ENCODE measurements at regions of chr17 and their contacts with region 1.

Region 1: DNA sequence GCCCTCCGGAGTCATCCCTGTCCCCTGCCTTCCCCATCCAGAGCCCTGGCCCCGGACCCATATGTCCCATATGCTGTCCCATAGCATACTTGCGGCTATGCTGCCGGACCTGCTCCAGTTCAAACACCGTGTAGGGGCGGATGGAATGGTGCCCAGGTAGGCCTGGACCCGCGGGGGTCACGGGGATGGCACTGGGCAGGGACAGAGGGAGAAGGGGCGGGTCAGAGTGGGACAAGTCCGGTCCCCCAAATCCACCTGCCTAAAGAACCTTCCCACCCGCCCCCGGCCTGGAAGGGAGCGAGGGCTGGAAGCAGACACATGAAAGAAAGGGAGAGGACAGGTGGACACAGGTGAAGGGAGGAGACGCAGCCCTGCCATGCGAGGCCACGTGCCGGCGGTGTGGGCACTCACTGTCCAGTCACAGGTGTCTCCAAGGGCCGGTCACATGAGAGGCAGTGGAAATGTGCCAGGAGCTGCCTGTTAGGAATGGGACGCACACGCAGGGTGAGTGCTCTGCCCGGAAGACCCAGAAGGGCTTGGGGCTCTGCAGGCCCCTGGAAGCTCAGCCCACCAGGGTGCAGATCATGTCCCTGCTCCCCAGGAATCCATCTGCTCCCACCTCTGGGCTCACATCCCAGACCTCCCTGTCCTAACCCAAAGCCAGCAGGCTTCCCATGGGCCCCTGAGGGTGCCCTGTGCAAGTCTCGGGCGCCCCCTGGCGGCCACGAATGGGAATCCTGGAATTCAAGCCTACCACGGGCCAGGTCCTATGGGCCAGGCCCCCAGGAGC is 14.0 kb downstream of the UBALD2 start:
- DNase-seq: peak; percentile 78 to 84 (median 79)
- H3K4me3 ChIP-seq: no peak overlapping the region
- H3K4me3 Mint-ChIP-seq: no peak overlapping the region
- H3K27ac ChIP-seq: no peak overlapping the region
- H3K27ac Mint-ChIP-seq: peak overlapping the region in 3 of 7 donors; percentile 25 to 77 (median 59)
- H3K4me1 ChIP-seq: peaks cover 17% of the 10 kb centered on the region
- H3K4me1 Mint-ChIP-seq: peaks cover 7 to 28% (median 10%) of the 10 kb centered on the region in 4 donors
- H3K27me3 ChIP-seq: no peaks in the 10 kb centered on the region
- H3K27me3 Mint-ChIP-seq: no peaks in the 10 kb centered on the region

Region 2: DNA sequence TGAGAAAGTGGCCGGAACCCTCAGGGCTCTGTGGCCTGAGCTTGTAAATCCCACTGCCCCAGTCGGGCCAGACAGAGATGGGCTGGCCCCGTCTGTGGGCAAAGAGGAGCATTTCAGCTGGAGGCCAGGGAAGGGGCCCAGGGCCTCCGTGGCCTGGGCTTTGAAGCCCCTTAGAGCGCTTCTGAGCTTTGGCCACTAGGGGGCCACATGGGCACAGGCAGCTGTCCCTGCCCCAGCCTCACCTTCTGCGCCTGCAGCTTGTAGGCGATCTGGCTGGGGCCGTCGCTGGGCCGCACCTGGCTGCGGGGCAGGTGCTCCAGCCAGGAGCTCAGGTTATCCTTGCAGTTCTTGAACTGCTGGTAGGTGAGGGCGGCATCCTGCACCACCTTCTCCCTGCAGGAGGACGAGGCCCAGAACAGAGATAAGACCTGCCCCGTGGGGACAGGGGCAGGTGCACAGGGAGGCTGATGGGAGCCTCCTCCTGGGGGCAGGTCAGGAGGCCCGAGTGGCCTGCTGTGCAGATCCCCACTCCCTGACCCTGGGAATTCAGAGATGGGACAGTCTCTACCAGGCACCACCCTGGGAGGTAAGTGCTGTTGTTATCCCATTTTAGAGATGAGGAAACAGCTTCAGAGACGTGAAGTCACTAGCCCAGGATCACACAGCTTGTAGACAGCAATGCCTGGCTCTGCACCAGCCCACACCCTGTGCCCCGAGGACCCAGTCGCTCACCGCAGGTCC is 264.8 kb before region 1 on chr17:
- CTCF ChIA-PET with region 1: interaction called, 42 read pairs
- POLR2A ChIA-PET with region 1: interaction called, 5 read pairs
- intact Hi-C with region 1: loop called (anchors 1 kb)
- DNase-seq: peak; percentile 72 to 79 (median 74)
- H3K4me3 ChIP-seq: no peak overlapping the region
- H3K4me3 Mint-ChIP-seq: peak overlapping the region in 2 of 8 donors; percentile 34 to 52
- H3K27ac ChIP-seq: no peak overlapping the region
- H3K27ac Mint-ChIP-seq: peak overlapping the region in 2 of 7 donors; percentile 50 to 81
- H3K4me1 ChIP-seq: peaks cover 8% of the 10 kb centered on the region
- H3K4me1 Mint-ChIP-seq: peaks cover 3 to 11% (median 6%) of the 10 kb centered on the region in 4 donors
- H3K27me3 ChIP-seq: no peaks in the 10 kb centered on the region
- H3K27me3 Mint-ChIP-seq: no peaks in the 10 kb centered on the region

Region 3: GRCh38 chr17:76103274-76104139 is 175.6 kb before region 1 on chr17 and contains the start of gene EXOC7:
- CTCF ChIA-PET with region 1: interaction called, 30 read pairs
- POLR2A ChIA-PET with region 1: interaction called, 4 read pairs
- intact Hi-C with region 1: no loop called
- DNase-seq: peak; percentile 88 to 95 (median 92)
- H3K4me3 ChIP-seq: peak within 1 kb of the TSS; percentile 84 to 86
- H3K4me3 Mint-ChIP-seq: peak within 1 kb of the TSS; percentile 92 to 98 (median 96)
- H3K27ac ChIP-seq: peak within 1 kb of the TSS; percentile 86
- H3K27ac Mint-ChIP-seq: peak within 1 kb of the TSS; percentile 95 to 99 (median 97)
- H3K4me1 ChIP-seq: peaks cover 27% of the 10 kb centered on the region
- H3K4me1 Mint-ChIP-seq: peaks cover 20 to 49% (median 33%) of the 10 kb centered on the region in 4 donors
- H3K27me3 ChIP-seq: no peaks in the 10 kb centered on the region
- H3K27me3 Mint-ChIP-seq: no peaks in the 10 kb centered on the region
- total RNA-seq, gene EXOC7: 183 to 184 TPM

Region 4: DNA sequence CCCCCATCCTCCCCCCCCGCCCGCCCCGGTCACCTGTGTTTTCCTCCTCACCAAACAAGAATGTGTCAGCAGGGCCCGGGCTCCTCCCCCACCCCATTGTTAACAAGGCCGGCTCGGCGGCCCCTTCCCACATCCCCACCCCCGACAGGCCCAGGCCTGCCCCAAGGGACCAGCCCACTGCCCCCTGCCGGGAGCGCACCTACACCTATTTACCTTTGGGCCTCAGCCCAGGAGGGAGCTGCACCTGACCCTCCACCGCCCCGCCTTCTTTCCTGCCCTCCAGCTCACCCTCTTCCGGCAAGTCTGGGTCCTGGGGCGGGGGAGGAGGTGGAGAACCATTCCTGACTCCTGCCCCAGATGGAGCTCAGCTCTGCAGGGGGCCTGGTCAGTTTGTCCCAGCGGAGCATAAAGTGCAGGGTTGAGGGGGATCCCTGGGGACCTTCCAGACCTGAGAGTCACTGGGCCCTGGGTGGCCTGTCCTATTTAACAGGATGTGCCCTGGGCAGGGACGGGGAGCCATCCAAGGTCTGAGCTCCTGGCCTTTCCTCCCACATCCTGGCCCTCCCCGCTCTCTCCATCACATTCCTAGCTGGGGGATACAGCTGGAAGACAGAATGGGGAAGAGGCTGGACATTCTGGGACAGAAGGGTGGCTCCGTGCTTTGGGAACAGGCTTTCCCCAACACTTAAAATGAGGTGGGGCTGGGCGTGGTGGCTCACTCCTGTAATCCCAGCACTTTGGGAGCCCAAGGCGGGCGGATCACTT is 146.4 kb before region 1 on chr17:
- CTCF ChIA-PET with region 1: interaction called, 232 read pairs
- POLR2A ChIA-PET with region 1: no interaction called
- intact Hi-C with region 1: no loop called
- DNase-seq: no peak
- H3K4me3 ChIP-seq: no peak overlapping the region
- H3K4me3 Mint-ChIP-seq: no peak overlapping the region
- H3K27ac ChIP-seq: no peak overlapping the region
- H3K27ac Mint-ChIP-seq: no peak overlapping the region
- H3K4me1 ChIP-seq: peaks cover 14% of the 10 kb centered on the region
- H3K4me1 Mint-ChIP-seq: peaks cover 6 to 11% (median 9%) of the 10 kb centered on the region in 4 donors
- H3K27me3 ChIP-seq: no peaks in the 10 kb centered on the region
- H3K27me3 Mint-ChIP-seq: no peaks in the 10 kb centered on the region

Region 5: DNA sequence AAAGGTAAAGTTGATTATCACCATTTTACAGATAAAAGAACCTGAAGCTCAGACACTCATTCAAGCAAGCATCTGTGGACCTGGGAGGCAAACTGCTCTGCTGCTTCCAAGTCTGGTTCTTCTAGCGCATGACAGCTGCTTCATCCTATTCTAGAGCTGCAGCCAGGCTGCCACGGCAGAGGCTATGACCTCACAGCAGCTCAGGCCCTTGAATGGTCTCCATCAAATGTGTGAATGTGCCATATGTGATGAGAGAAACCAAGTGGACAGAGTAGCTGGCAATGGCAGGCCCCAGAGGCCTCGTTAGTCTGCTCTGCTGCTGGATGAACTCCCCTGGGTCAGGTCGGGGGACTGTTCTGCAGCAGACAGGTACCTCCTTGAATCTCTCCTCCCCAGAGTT is 107.4 kb before region 1 on chr17:
- CTCF ChIA-PET with region 1: interaction called, 168 read pairs
- POLR2A ChIA-PET with region 1: interaction called, 603 read pairs
- intact Hi-C with region 1: no loop called
- DNase-seq: no peak
- H3K4me3 ChIP-seq: no peak overlapping the region
- H3K4me3 Mint-ChIP-seq: no peak overlapping the region
- H3K27ac ChIP-seq: no peak overlapping the region
- H3K27ac Mint-ChIP-seq: no peak overlapping the region
- H3K4me1 ChIP-seq: no peaks in the 10 kb centered on the region
- H3K4me1 Mint-ChIP-seq: peaks cover 3 to 9% (median 4%) of the 10 kb centered on the region in 4 donors
- H3K27me3 ChIP-seq: no peaks in the 10 kb centered on the region
- H3K27me3 Mint-ChIP-seq: no peaks in the 10 kb centered on the region

Region 6: DNA sequence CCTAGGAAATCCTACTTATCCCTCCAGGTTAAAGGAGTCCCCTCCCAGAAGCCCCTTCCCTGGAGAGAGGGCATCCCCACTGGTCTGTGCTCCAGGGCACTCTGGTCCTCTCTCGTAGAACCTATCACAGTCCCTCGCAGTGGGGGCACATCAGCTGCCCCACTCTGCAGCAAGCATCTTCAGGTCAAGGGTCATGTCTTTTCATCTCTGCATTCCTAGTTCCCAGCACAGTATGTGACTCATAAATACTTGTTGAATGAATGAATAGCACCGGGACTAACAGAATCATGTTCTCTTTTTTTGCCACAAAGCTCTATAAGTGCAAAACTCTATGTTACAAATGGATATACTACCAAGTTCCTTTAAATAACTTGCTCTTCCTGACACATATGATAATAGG is 74.9 kb before region 1 on chr17:
- CTCF ChIA-PET with region 1: interaction called, 12 read pairs
- POLR2A ChIA-PET with region 1: interaction called, 80 read pairs
- intact Hi-C with region 1: no loop called
- DNase-seq: no peak
- H3K4me3 ChIP-seq: no peak overlapping the region
- H3K4me3 Mint-ChIP-seq: no peak overlapping the region
- H3K27ac ChIP-seq: no peak overlapping the region
- H3K27ac Mint-ChIP-seq: peak overlapping the region in 4 of 7 donors; percentile 53 to 70 (median 56)
- H3K4me1 ChIP-seq: peaks cover 73% of the 10 kb centered on the region
- H3K4me1 Mint-ChIP-seq: peaks cover 41 to 75% (median 63%) of the 10 kb centered on the region in 4 donors
- H3K27me3 ChIP-seq: no peaks in the 10 kb centered on the region
- H3K27me3 Mint-ChIP-seq: no peaks in the 10 kb centered on the region

Region 7: GRCh38 chr17:76296186-76296585 is 17.0 kb after region 1 on chr17:
- CTCF ChIA-PET with region 1: interaction called, 35 read pairs
- POLR2A ChIA-PET with region 1: no interaction called
- intact Hi-C with region 1: loop called (anchors 1 kb)
- DNase-seq: no peak
- H3K4me3 ChIP-seq: no peak overlapping the region
- H3K4me3 Mint-ChIP-seq: no peak overlapping the region
- H3K27ac ChIP-seq: no peak overlapping the region
- H3K27ac Mint-ChIP-seq: peak overlapping the region in 1 of 7 donors; percentile 46
- H3K4me1 ChIP-seq: no peaks in the 10 kb centered on the region
- H3K4me1 Mint-ChIP-seq: peaks cover 0 to 2% (median under 1%) of the 10 kb centered on the region in 4 donors
- H3K27me3 ChIP-seq: no peaks in the 10 kb centered on the region
- H3K27me3 Mint-ChIP-seq: no peaks in the 10 kb centered on the region

Region 8: GRCh38 chr17:76337413-76337777 is 58.2 kb after region 1 on chr17:
- CTCF ChIA-PET with region 1: no interaction called
- POLR2A ChIA-PET with region 1: no interaction called
- intact Hi-C with region 1: no loop called
- DNase-seq: no peak
- H3K4me3 ChIP-seq: no peak overlapping the region
- H3K4me3 Mint-ChIP-seq: no peak overlapping the region
- H3K27ac ChIP-seq: no peak overlapping the region
- H3K27ac Mint-ChIP-seq: peak overlapping the region in 1 of 7 donors; percentile 7
- H3K4me1 ChIP-seq: no peaks in the 10 kb centered on the region
- H3K4me1 Mint-ChIP-seq: peaks cover 3 to 9% (median 6%) of the 10 kb centered on the region in 4 donors
- H3K27me3 ChIP-seq: no peaks in the 10 kb centered on the region
- H3K27me3 Mint-ChIP-seq: no peaks in the 10 kb centered on the region